Ascending aorta (tissue), 2 donors: ENCODE measurements at regions of chr3 and their contacts with region 1.

Region 1: DNA sequence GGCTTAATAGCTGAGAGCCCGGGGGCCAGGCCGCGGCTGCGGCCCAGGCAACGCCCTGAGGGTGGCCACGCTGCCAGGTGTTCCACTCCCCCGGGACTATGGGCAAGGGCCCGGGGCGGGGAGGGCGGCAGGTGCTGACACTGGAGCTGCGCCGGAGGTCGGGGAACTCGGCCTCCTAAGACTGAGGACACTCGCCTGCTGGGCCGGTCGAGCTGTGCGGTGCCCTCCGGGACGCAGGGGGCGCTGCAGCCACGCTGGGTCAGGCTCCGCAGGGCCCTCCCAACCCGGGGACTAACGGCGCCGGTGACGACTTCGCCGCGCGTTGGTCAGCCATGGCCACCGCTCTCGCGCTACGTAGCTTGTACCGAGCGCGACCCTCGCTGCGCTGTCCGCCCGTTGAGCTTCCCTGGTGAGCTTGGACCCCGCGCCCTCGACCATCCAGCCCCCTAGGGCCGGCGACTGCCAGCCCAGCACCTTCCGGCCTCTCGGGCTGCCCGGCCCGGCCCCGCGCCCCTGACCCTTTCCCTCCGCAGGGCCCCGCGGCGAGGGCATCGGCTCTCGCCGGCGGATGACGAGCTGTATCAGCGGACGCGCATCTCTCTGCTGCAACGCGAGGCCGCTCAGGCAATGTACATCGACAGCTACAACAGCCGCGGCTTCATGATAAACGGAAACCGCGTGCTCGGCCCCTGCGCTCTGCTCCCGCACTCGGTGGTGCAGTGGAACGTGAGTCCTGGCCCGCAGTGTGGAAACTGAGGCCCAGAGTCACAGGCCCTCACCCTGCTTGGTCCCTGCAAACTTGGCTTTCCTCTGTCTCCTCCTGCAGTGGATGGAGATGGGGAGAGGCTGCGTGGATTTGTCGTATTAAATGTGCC is at the start of gene NDUFAF3:
- DNase-seq: peak; percentile 68 to 95
- H3K4me3 ChIP-seq: peak within 1 kb of the TSS; percentile 88 to 93
- H3K27ac ChIP-seq: peak within 1 kb of the TSS; percentile 100
- H3K4me1 ChIP-seq: peaks cover 16 to 29% of the 10 kb centered on the region in 2 donors
- H3K27me3 ChIP-seq: no peaks in the 10 kb centered on the region
- CTCF ChIP-seq: peak; percentile 97 to 99 (median 98)
- total RNA-seq, gene NDUFAF3: 200 TPM

Region 2: GRCh38 chr3:48765376-48765775 is 256.7 kb before region 1 on chr3:
- intact Hi-C with region 1: no loop called
- DNase-seq: no peak
- H3K4me3 ChIP-seq: no peak overlapping the region
- H3K27ac ChIP-seq: no peak overlapping the region
- H3K4me1 ChIP-seq: no peaks in the 10 kb centered on the region
- H3K27me3 ChIP-seq: no peaks in the 10 kb centered on the region
- CTCF ChIP-seq: no peak

Region 3: DNA sequence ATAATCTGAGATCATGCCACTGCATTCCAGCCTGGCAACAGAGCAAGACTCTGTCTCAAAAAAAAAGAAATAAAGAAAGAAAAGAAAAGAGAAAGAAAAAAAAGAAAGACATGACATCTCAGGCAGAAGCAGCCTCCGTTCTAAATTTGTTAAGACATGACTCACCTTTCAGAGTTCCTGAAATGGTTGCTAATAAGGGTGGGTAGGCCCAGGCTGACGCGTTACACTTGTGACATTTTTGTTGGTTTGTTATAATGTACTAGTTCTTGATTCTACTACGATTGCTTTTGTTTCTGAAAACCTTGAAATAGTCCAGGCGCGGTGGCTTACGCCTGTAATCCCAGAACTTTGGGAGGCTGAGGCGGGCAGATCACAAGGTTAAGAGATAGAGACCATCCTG is 144.4 kb before region 1 on chr3:
- intact Hi-C with region 1: no loop called
- DNase-seq: no peak
- H3K4me3 ChIP-seq: no peak overlapping the region
- H3K27ac ChIP-seq: no peak overlapping the region
- H3K4me1 ChIP-seq: no peaks in the 10 kb centered on the region
- H3K27me3 ChIP-seq: no peaks in the 10 kb centered on the region
- CTCF ChIP-seq: no peak

Region 4: DNA sequence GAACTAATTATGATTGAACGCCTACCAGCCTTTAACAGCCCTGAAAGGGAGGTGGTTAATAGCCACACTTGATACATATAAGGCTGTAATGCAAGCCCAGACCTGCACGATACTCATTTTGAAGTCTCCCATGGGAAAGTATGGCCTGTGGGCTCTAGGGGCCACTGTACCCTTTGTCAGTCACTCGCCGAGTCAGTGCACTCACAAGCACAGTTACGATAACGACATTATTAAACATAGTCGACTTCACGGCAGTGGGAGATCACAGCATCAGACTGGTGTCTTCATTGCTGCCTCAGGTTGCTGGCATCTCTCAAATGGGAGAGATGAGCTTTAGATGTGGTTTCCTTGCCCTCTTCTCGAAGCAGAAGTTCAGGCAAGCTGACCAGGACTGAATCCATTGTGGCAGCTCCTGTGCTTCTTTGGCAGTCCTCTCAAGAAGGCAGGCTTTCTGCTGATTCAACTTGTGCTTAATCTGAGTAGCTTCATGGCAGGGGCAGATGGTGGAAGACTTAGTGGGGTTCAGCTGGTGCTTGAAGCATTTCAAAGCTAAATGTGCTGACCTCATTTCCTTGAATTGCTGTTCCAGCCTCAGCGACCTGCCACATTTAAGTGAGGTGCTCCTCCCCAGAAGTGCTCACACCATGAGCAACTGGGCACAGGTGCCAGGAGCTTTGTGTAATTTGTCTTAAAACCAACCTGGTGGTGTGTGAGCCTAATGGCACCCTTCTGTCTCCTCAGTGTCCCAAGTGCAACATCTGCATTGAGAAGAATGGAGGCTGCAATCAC is 47.8 kb before region 1 on chr3:
- intact Hi-C with region 1: no loop called
- DNase-seq: no peak
- H3K4me3 ChIP-seq: no peak overlapping the region
- H3K27ac ChIP-seq: no peak overlapping the region
- H3K4me1 ChIP-seq: no peaks in the 10 kb centered on the region
- H3K27me3 ChIP-seq: no peaks in the 10 kb centered on the region
- CTCF ChIP-seq: no peak

Region 5: DNA sequence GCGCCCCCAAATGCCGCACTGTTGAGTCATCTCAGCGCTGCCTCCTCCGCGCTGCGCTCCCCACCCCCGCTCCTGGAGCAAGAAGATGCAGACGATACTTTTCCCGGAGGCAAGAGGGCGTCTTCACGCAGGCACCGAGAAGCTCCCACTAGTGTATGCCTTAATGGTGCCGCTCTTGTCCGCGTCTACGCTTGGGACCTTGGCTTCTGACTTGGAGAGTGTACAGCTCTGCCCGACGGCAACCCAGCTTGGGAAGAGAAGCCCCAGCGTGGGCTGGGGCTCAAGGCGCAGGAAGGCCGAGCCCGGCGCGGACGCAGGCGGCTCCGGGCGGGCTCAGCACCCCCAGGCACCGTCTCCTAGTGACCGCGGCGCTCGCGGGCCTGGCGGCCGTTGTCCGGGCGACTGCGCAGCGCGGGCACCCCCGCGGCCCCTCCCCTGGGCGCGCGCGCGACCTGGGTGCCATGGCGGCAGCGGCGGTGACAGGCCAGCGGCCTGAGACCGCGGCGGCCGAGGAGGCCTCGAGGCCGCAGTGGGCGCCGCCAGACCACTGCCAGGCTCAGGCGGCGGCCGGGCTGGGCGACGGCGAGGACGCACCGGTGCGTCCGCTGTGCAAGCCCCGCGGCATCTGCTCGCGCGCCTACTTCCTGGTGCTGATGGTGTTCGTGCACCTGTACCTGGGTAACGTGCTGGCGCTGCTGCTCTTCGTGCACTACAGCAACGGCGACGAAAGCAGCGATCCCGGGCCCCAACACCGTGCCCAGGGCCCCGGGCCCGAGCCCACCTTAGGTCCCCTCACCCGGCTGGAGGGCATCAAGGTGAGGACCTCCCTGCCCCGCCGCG is 32.0 kb before region 1 on chr3 and contains the start of gene P4HTM:
- intact Hi-C with region 1: loop called (anchors 2 kb)
- DNase-seq: peak; percentile 46 to 96
- H3K4me3 ChIP-seq: peak within 1 kb of the TSS; percentile 80 to 99
- H3K27ac ChIP-seq: peak within 1 kb of the TSS; percentile 92 to 97
- H3K4me1 ChIP-seq: peaks cover 10 to 26% of the 10 kb centered on the region in 2 donors
- H3K27me3 ChIP-seq: no peaks in the 10 kb centered on the region
- CTCF ChIP-seq: peak in 2 of 3 experiments; percentile 35 to 45
- total RNA-seq, gene P4HTM: 71.9 TPM

Region 6: GRCh38 chr3:49276475-49277382 is 254.7 kb after region 1 on chr3 and contains the start of gene C3orf62:
- intact Hi-C with region 1: loop called (anchors 5 kb)
- DNase-seq: peak; percentile 56 to 95
- H3K4me3 ChIP-seq: peak within 1 kb of the TSS; percentile 50 to 64
- H3K27ac ChIP-seq: peak within 1 kb of the TSS; percentile 93 to 96
- H3K4me1 ChIP-seq: peaks cover 6 to 10% of the 10 kb centered on the region in 2 donors
- H3K27me3 ChIP-seq: no peaks in the 10 kb centered on the region
- CTCF ChIP-seq: no peak
- total RNA-seq, gene C3orf62: 0.43 TPM